Mucosa of descending colon (tissue), 3 donors: ENCODE measurements at regions of chr5 and their contacts with region 1.

Region 1: GRCh38 chr5:159987031-159987674 is 21.8 kb upstream of the TTC1 start:
- DNase-seq: peak; percentile 87 to 92 (median 89)
- ATAC-seq: peak; percentile 99
- H3K4me3 ChIP-seq: no peak overlapping the region
- H3K4me1 ChIP-seq: no peaks in the 10 kb centered on the region
- CTCF ChIP-seq: peak; percentile 63

Region 2: GRCh38 chr5:159444441-159445082 is 542.6 kb before region 1 on chr5:
- intact Hi-C with region 1: loop called in 1 of 2 experiments (anchors 10 kb)
- DNase-seq: no peak
- ATAC-seq: no peak
- H3K4me3 ChIP-seq: no peak overlapping the region
- H3K4me1 ChIP-seq: no peaks in the 10 kb centered on the region
- CTCF ChIP-seq: no peak